ENCODE measurements at regions of chr12 and their contacts with region 1.

Region 1: DNA sequence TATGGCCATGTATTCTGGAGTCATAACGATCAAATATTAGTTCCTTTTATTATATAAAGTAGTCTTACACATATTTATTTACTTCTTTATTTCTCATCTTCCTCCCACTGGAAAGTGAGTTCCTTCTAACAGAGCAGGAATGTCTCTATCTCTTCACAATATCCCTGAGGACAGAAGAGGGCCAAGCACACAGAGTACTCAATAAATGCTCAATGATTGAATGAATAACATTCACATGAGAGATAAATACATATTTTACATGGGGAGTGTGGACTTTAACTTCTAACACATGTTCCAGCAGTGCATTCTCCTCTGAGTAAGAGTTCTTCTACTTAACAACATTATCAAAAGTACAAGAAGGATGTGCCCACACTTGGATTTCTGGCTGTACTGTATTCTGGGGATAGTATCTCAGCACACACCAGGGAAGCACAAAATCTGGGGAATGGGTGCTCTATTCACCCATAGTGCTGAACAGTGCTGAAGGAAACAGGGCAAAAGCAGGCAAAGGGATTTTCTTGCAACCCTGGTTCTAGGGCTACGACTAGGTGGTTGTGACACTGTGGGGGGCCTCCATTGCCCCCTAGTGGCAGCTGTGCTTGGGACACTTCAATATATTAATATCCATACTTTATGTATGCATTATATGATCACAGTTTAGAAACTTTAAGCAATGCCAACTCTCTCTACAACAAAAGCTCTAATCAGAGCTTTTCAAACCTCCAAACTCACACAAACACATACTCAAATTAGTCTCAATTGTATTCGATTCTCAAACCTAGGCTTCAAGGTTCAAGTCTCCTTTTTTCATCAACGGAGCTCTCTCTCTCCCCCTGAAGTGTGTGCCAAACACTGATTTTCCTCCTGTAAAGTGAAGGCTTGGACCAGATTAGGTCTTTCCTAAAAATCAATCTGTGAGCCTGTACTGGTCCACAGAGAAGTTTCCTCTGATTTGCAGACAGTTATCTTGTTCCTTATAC is 115.5 kb downstream of the SLC2A13 start:
- DNase-seq: peak; percentile 41 to 55
- ATAC-seq: peak in 2 of 4 donors; percentile 62 to 68
- H3K4me3 ChIP-seq: no peak overlapping the region
- H3K27ac ChIP-seq: no peak overlapping the region
- H3K4me1 ChIP-seq: no peaks in the 10 kb centered on the region
- H3K27me3 ChIP-seq: no peaks in the 10 kb centered on the region
- CTCF ChIP-seq: peak; percentile 71

Region 2: DNA sequence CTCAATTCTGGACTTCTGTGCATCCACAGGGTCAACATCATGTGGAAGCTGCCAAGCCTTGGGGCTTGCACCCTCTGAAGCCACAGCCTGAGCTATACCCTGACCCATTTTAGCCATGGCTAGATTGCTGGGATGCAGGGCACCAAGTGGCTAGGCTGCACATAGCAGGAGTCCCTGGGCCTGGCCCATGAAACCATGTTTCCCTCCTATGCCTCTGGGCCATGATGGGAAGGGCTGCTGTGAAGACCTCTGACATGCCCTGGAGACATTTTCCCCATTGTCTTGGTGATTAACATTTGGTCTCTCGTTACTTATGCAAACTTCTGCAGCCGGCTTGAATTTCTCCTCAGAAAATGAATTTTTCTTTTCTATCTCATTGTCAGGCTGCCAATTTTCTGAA is 463.4 kb before region 1 on chr12:
- intact Hi-C with region 1: no loop called
- DNase-seq: no peak
- ATAC-seq: no peak
- H3K4me3 ChIP-seq: no peak overlapping the region
- H3K27ac ChIP-seq: no peak overlapping the region
- H3K4me1 ChIP-seq: no peaks in the 10 kb centered on the region
- H3K27me3 ChIP-seq: no peaks in the 10 kb centered on the region
- CTCF ChIP-seq: no peak

Region 3: DNA sequence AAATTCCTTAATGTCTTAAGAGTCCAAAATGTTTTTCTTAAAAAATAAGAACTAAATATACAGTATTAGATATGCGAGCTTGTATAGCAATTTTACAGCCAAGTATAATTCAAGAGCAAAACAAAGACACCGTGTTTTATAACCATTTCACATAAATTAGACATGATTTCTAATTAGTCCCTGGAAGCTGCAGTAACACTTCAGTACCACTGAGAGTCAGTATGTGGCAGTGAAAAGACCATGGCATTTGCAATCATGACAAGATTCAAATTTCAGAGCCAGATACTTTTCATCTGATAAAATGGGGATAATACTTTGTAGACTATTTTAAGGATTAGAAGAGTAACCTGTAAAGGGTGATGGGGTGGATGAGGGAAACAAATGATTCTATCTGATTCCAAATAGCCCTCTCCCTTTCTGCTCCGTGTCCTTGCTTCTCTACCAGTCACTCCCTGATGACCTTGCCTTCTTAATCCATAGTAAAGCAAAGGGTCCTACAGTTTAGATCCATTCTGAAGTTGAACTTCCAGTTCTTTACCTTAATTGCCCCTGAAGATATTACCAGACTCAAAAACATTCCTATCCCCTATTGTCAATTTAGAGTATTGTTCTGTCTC is 225.4 kb before region 1 on chr12:
- intact Hi-C with region 1: loop called (anchors 2 to 10 kb)
- DNase-seq: no peak
- ATAC-seq: no peak
- H3K4me3 ChIP-seq: no peak overlapping the region
- H3K27ac ChIP-seq: no peak overlapping the region
- H3K4me1 ChIP-seq: no peaks in the 10 kb centered on the region
- H3K27me3 ChIP-seq: no peaks in the 10 kb centered on the region
- CTCF ChIP-seq: peak; percentile 72

Region 4: DNA sequence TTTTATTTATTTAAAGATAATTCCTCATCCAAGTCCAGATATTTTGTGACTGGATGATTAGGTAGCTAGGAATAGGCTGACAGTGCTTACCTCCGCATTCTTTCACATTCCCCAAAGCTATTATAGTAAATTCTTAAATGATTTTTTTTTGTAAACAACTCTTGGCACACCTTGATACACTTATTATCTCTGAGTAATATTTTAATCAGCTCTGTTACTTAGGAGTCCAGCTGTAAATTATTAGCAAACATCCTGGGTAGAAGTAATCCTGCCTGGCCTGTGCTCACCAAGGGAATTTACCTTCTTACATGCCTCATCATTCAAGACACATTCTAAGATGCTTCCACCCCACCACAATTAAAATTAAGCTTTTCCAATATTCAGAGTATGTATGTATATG is 70.6 kb before region 1 on chr12:
- intact Hi-C with region 1: no loop called
- DNase-seq: no peak
- ATAC-seq: no peak
- H3K4me3 ChIP-seq: no peak overlapping the region
- H3K27ac ChIP-seq: no peak overlapping the region
- H3K4me1 ChIP-seq: no peaks in the 10 kb centered on the region
- H3K27me3 ChIP-seq: no peaks in the 10 kb centered on the region
- CTCF ChIP-seq: no peak